ENCODE measurements at regions of chr18 and their contacts with region 1.

Region 1: DNA sequence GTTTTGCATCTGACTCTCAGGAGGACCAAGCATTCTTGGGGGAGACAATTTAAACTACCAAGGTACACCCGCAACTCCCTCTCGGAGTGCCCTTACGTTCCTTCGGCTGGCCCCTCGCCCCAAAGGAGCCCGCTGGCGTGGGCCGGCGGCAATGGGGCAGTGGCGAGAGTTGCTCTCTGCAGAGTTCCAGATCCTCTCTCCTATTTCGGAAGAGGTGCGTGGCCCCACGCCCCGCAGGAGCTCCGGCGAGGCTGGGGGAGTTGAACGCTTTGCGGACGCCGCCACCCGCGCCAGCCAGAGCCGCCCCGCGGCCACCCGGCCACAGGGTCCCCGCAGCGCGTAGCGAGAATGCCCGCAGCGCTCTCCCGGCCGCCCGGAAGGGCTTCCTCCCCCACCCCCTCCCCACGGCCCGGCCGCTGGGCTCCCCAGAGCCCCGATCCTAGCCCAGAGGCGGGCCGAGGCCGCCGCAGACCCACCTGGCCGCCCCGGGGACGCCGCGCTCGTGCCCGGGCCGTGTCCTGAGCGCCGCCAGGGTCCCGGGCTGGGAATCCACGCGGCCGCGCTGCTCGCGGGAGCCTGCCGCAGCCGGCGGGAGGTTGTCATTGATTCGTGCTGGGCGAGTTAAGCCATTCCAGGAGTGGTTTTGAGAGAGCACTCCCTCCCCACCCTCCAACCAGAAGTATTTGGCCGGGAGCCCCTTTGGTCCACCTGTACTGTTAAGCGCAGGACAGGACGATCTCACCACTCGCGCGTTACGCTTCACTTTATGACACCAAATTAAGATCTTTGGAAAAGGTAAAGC is 206.3 kb upstream of the SMAD2 start:
- DNase-seq: peak in 1 of 2 donors; percentile 60
- H3K4me3 ChIP-seq: peak overlapping the region; percentile 59 to 90 (median 77)
- H3K27ac ChIP-seq: peak overlapping the region; percentile 90 to 91
- H3K4me1 ChIP-seq: peaks cover 0 to 38% of the 10 kb centered on the region in 2 donors
- H3K27me3 ChIP-seq: no peaks in the 10 kb centered on the region
- CTCF ChIP-seq: no peak
- POLR2A ChIP-seq: no peak

Region 2: GRCh38 chr18:48100651-48101165 is 36.0 kb before region 1 on chr18:
- intact Hi-C with region 1: no loop called
- DNase-seq: no peak
- H3K4me3 ChIP-seq: no peak overlapping the region
- H3K27ac ChIP-seq: no peak overlapping the region
- H3K4me1 ChIP-seq: no peaks in the 10 kb centered on the region
- H3K27me3 ChIP-seq: no peaks in the 10 kb centered on the region
- CTCF ChIP-seq: no peak
- POLR2A ChIP-seq: no peak

Region 3: GRCh38 chr18:48711651-48712486 is 575.1 kb after region 1 on chr18:
- intact Hi-C with region 1: loop called (anchors 5 kb)
- DNase-seq: no peak
- H3K4me3 ChIP-seq: no peak overlapping the region
- H3K27ac ChIP-seq: no peak overlapping the region
- H3K4me1 ChIP-seq: no peaks in the 10 kb centered on the region
- H3K27me3 ChIP-seq: no peaks in the 10 kb centered on the region
- CTCF ChIP-seq: peak in 2 of 3 donors; percentile 42 to 51
- POLR2A ChIP-seq: no peak

Region 4: DNA sequence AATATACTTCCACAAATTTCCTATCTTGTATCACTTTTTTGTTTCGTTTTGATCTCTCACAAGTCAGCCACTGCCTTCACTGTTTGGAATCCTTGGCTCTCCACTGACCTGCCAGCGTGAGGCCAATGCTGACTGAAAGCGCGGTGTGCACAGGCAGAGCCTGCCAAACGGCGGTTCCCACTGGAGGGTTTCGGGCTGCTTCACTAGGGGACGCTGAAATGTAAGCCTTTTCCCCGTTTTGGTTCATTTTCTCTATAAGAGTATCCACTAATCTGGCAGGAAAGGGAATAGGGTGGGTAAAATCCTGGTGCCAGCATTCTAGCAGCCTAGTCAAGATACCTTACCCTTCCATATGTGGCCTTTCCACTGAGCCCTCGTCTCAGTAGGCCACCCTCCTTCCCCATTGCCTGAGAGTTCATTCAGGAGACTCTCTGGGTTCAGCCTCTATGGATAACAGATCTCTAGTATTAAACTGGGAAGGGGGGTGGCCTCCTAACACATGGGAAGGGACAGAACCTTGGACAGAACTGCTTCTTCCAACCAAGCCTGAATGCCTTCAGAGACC is 1232.2 kb after region 1 on chr18:
- intact Hi-C with region 1: loop called (anchors 5 kb)
- DNase-seq: peak; percentile 38 to 62
- H3K4me3 ChIP-seq: peak overlapping the region in 2 of 3 donors; percentile 33 to 35
- H3K27ac ChIP-seq: peak overlapping the region; percentile 59 to 75
- H3K4me1 ChIP-seq: no peaks in the 10 kb centered on the region
- H3K27me3 ChIP-seq: no peaks in the 10 kb centered on the region
- CTCF ChIP-seq: no peak
- POLR2A ChIP-seq: no peak

Region 5: GRCh38 chr18:49690307-49690706 is 1553.6 kb after region 1 on chr18:
- intact Hi-C with region 1: loop called (anchors 5 kb)
- DNase-seq: no peak
- H3K4me3 ChIP-seq: no peak overlapping the region
- H3K27ac ChIP-seq: no peak overlapping the region
- H3K4me1 ChIP-seq: no peaks in the 10 kb centered on the region
- H3K27me3 ChIP-seq: no peaks in the 10 kb centered on the region
- CTCF ChIP-seq: no peak
- POLR2A ChIP-seq: no peak

Measured in breast epithelium (tissue), 4 donors.